ENCODE measurements at regions of chr4 and their contacts with region 1.

Region 1: GRCh38 chr4:74531963-74532794 is 87.2 kb downstream of the AREG start:
- DNase-seq: peak; percentile 47
- H3K4me3 ChIP-seq: no peak overlapping the region
- CTCF ChIP-seq: peak; percentile 67

Region 2: GRCh38 chr4:74320559-74321118 is 211.5 kb before region 1 on chr4:
- CTCF ChIA-PET with region 1: interaction called, 51 read pairs
- POLR2A ChIA-PET with region 1: no interaction called
- DNase-seq: no peak
- H3K4me3 ChIP-seq: no peak overlapping the region; the same call in 1 of the 2 replicates
- CTCF ChIP-seq: peak; percentile 19

Region 3: GRCh38 chr4:74370912-74371311 is 161.3 kb before region 1 on chr4:
- CTCF ChIA-PET with region 1: interaction called, 160 read pairs
- POLR2A ChIA-PET with region 1: no interaction called
- DNase-seq: no peak
- H3K4me3 ChIP-seq: no peak overlapping the region
- CTCF ChIP-seq: peak; percentile 79

Region 4: DNA sequence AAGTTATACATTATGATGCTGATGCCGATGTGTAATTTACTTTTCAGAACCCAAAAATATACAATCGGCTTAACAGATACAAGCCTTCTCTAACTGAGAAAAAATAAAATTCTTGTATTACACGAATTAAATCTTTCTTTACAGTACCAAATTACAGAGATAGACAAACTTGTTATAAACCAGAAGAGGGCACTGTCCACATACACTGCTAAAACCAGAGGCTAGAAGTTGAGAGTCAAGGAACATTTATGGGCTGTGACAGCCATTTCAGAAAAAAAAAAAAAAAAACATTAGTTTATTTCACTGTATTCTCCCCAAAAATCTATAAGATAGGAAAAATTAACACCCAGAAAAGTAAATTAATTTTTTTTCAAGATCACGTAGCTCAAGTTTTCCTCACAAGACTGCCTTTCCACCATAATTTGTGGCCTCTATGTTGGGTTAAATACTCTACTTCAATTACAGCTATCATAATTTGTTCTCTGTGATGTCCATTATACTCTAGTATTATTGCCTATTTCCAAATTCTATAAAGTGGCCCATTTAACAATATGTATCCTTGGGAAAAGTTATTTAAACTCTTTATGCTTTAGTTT is 155.2 kb before region 1 on chr4:
- CTCF ChIA-PET with region 1: interaction called, 160 read pairs
- POLR2A ChIA-PET with region 1: interaction called, 3 read pairs
- DNase-seq: no peak
- H3K4me3 ChIP-seq: no peak overlapping the region
- CTCF ChIP-seq: peak; percentile 38

Region 5: DNA sequence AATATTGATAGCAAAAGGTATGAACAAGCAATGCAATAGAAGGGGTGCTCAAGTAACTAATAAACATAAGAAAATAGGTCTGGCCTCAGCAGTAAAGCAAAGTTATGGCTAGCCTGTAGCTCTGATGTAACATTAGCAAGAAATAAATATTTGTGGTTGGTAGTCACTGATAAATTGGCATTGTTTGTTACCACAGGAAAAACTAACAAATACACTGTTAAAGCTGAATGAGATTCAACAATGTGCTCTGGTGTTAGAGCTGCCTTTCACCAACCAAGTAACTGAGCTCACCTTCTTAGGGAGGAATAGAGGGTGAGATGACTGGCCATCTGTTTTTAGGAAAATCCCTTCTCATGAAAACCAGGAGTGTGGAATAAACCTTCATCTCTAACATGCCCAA is 15.9 kb before region 1 on chr4:
- CTCF ChIA-PET with region 1: interaction called, 42 read pairs
- POLR2A ChIA-PET with region 1: no interaction called
- DNase-seq: no peak
- H3K4me3 ChIP-seq: no peak overlapping the region
- CTCF ChIP-seq: no peak

Region 6: DNA sequence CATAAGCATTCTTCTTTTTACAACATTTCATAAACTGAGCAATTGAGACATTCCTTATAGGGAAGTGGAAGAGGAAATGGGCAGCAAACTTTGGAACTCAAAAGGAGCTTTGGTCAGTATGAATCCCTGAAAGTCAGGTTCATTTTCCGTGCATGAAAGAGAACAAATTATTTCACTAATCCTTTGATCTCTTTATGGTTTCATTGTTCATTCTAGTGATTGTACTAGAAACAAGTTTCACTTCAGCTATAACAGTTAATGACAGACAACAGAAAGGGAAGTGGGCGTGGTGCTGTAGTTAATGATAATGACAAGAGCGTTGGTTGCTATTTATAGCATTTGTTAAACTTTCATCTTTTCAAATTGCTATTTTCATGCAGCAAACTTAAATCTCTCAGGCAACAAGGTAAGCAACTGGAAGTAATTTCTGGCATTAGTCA is 11.1 kb after region 1 on chr4:
- CTCF ChIA-PET with region 1: interaction called, 43 read pairs
- POLR2A ChIA-PET with region 1: interaction called, 3 read pairs
- DNase-seq: no peak
- H3K4me3 ChIP-seq: no peak overlapping the region
- CTCF ChIP-seq: no peak

Region 7: GRCh38 chr4:74549936-74550335 is 17.8 kb after region 1 on chr4:
- CTCF ChIA-PET with region 1: interaction called, 43 read pairs
- POLR2A ChIA-PET with region 1: no interaction called
- DNase-seq: no peak
- H3K4me3 ChIP-seq: no peak overlapping the region
- CTCF ChIP-seq: no peak

Region 8: DNA sequence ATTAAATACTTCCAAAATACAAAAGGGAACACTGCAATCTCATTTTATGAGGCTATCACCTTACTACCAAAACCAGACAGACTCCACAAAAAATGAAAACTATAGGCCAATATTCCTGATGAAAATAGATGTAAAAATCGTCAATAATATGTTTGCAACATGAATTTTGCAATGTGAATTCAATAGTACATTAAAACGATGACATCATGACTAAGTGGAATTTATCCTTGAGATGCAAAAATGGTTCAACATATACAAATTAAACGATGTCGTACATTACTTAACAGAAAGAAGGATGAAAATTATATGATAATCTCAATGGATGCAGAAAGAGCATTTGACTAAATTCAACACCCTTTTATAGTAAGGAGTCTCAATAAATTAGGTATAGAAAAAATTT is 35.8 kb after region 1 on chr4:
- CTCF ChIA-PET with region 1: no interaction called
- POLR2A ChIA-PET with region 1: no interaction called
- DNase-seq: no peak
- H3K4me3 ChIP-seq: no peak overlapping the region
- CTCF ChIP-seq: no peak